ENCODE measurements at regions of chr15 and their contacts with region 1.

Region 1: DNA sequence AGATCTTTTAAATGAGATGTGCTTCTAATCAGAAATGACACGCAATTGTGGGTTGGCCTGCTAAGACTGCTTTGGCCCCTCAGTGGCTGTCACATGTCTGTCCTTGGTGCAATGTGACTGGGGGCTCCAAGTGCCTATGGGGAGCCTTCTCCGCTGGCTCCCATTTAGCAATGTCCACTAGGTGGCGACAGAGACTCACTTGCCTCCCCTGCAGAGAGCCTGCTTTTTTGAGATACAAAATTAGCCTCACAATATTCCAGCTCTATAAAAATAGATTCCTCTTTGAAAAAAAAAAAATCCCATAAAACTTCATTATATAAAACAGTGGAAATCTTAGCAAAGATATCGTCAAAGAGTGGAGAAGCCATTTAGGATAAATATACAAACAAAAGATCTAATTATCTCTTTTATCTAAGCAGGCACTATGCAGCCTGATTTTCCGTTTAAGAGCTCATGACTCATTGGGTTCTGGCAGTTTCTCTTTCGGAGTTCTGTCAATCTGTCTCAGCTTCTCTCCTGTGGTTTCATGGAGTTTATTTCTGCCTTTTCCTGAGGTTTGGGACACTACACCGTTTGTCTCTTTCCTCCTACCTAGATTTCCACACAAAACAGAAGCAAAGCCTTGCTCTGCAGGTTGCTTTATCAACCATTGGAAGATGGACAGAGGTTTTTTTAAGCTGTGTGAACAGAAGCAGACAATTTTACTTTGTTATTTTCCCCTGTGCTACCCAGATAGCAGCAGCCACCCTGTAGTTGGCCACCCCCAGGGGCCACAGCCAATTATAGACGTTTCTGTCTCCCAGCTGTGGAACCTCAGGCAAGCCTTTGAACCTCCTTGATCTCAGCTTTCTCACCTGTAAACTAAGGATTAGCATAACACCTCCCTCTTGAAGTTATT is 68.4 kb upstream of the TNFAIP8L3 start:
- DNase-seq: peak; percentile 9
- ATAC-seq: peak; percentile 99
- H3K4me3 ChIP-seq: no peak overlapping the region
- H3K27ac ChIP-seq: no peak overlapping the region
- H3K4me1 ChIP-seq: no peaks in the 10 kb centered on the region
- H3K27me3 ChIP-seq: no peaks in the 10 kb centered on the region
- CTCF ChIP-seq: peak; percentile 87 to 95 (median 91)
- EP300 ChIP-seq: no peak
- POLR2A ChIP-seq: no peak
- RAD21 ChIP-seq: peak; percentile 92

Region 2: DNA sequence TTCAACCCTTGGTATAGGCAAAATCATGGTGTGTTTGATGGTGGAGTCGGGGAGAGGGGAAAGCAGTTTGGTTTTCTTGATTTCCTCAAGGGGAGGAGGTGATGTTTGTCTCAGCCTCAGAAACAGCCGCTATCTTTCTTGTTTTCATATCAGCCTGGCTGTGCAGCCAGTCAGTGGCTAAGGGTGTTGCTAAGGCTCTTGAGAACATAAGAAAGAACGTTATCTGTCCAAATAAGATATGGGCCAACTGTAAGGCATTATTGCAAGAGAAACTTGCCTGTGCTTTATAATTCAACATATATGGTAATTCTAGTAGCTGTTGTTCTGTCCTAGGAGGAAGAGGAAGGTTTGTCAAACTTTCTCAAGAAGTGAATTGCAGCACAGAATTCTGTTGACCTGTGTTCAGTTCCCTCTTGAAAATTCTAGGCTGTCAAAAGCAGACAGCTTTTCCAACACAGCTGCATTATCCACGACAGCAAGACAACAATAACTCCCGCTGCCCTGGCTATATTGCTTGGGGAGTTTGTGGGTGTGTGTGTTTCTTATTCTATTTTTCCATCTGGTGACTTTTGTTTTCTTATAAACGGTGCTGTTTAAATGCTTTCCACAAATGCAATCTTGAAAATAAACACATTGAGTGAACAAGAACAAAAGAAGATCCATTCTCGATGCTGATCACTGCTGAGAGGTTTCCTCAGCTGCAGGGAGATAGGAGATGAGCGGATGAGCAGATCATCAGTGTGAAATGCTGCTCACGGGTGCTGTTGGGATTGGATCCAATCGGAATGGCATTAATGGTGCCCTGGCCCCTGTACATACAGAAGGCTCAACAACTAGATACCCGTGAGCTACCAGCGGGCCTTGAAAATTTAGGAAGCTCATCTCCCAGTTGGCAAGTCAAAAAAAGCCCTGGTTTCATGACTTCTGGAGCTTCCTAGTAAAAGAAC is 22.4 kb after region 1 on chr15:
- CTCF ChIA-PET with region 1: interaction called, 20 read pairs
- POLR2A ChIA-PET with region 1: no interaction called
- RAD21 ChIA-PET with region 1: interaction called, 3 read pairs
- SMC1A ChIA-PET with region 1: interaction called, 4 read pairs
- in situ Hi-C with region 1: no loop called
- intact Hi-C with region 1: no loop called
- DNase-seq: no peak
- ATAC-seq: no peak
- H3K4me3 ChIP-seq: no peak overlapping the region
- H3K27ac ChIP-seq: no peak overlapping the region
- H3K4me1 ChIP-seq: no peaks in the 10 kb centered on the region; the same call in 1 of the 2 replicates
- H3K27me3 ChIP-seq: peaks cover 0 to 5% of the 10 kb centered on the region in 2 experiments; a peak in 3 of 4 replicates
- CTCF ChIP-seq: no peak
- EP300 ChIP-seq: no peak
- POLR2A ChIP-seq: no peak
- RAD21 ChIP-seq: no peak

Region 3: GRCh38 chr15:51203797-51204196 is 40.7 kb after region 1 on chr15:
- CTCF ChIA-PET with region 1: interaction called, 102 read pairs
- POLR2A ChIA-PET with region 1: no interaction called
- RAD21 ChIA-PET with region 1: no interaction called
- SMC1A ChIA-PET with region 1: interaction called, 6 read pairs
- in situ Hi-C with region 1: no loop called
- intact Hi-C with region 1: no loop called
- DNase-seq: no peak
- ATAC-seq: no peak
- H3K4me3 ChIP-seq: no peak overlapping the region
- H3K27ac ChIP-seq: no peak overlapping the region
- H3K4me1 ChIP-seq: no peaks in the 10 kb centered on the region
- H3K27me3 ChIP-seq: peaks cover 0 to 4% of the 10 kb centered on the region in 2 experiments; a peak in 1 of 4 replicates
- CTCF ChIP-seq: no peak
- EP300 ChIP-seq: no peak
- POLR2A ChIP-seq: no peak
- RAD21 ChIP-seq: no peak

Region 4: DNA sequence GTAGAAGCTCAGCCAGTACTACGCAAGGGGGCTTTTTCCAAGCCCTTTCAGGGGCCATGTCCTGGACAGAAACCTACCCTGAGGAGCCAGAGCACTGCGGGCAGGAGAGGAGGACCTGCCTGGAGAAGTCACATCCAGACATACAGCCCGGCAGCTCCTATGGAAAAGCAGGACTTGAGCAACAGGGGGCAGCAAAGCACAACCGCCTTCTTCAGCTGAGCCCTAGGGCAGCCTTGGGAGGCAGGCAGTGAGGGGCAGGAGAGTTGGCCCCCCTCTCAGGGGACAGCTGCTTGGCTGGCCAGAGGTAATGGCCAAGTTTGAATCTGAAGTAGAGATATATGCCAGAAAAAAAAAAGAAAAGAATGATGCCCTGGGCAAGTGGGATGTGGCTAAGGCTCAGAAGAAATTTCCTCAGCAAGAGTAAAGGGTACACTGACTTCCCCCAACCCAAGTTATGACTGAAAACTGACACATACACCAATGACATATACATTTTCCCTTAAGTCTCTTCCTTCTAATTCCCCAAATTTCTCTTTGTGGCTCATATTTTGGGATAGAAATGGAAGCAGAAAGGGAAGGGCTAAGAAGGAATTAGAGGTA is 118.4 kb after region 1 on chr15:
- CTCF ChIA-PET with region 1: interaction called, 57 read pairs
- POLR2A ChIA-PET with region 1: no interaction called
- RAD21 ChIA-PET with region 1: interaction called, 4 read pairs
- SMC1A ChIA-PET with region 1: interaction called, 22 read pairs
- in situ Hi-C with region 1: no loop called
- intact Hi-C with region 1: loop called (anchors 1 kb)
- DNase-seq: no peak
- ATAC-seq: peak; percentile 93
- H3K4me3 ChIP-seq: no peak overlapping the region
- H3K27ac ChIP-seq: no peak overlapping the region
- H3K4me1 ChIP-seq: peaks cover 10% of the 10 kb centered on the region
- H3K27me3 ChIP-seq: peaks cover 0 to under 1% of the 10 kb centered on the region in 2 experiments; a peak in 1 of 4 replicates
- CTCF ChIP-seq: peak; percentile 61 to 71 (median 68); a peak in 5 of 6 replicates
- EP300 ChIP-seq: no peak
- POLR2A ChIP-seq: no peak
- RAD21 ChIP-seq: peak; percentile 75

Region 5: GRCh38 chr15:51299187-51300066 is 136.3 kb after region 1 on chr15:
- CTCF ChIA-PET with region 1: interaction called, 14 read pairs
- POLR2A ChIA-PET with region 1: no interaction called
- RAD21 ChIA-PET with region 1: interaction called, 3 read pairs
- SMC1A ChIA-PET with region 1: interaction called, 3 read pairs
- in situ Hi-C with region 1: no loop called
- intact Hi-C with region 1: no loop called
- DNase-seq: no peak
- ATAC-seq: no peak
- H3K4me3 ChIP-seq: no peak overlapping the region
- H3K27ac ChIP-seq: no peak overlapping the region
- H3K4me1 ChIP-seq: no peaks in the 10 kb centered on the region
- H3K27me3 ChIP-seq: peaks cover 0 to 3% of the 10 kb centered on the region in 2 experiments; a peak in 3 of 4 replicates
- CTCF ChIP-seq: no peak
- EP300 ChIP-seq: no peak
- POLR2A ChIP-seq: no peak
- RAD21 ChIP-seq: no peak

Region 6: DNA sequence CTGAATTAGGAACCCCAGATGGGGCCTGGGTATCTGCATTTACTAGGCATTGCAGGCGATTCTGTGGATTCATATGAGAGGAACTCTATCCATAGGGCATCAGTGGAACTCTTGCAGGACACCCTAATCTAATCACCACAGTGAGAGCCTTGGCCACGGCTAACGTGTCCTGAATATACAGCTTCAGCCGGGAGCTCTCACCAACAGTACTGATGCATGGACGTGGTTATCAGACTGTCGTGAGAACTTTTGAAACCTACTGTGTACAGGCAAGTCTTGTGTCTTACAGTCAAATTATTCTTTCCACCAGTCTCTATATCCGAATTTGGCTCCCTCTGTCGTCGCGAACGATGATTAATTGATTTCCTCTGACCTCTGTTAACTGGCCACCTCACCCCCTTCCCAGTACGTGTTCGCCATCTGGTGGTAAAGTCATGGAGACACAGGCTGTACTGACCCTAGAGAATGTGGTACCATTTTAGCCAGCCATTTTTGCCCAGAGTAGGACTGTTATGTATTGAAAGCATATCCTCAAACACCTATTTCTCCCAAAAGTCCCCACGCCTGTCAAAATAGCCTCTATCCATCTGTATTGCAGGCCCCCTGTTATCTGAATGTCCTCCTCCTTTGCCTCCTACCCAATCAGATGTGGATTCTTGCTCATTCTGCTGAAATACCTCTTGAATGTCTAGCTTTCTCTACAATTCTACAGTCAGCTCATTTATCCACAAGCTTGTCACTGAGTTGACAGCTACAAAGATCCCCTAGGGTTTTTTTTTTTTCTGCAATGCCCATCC is 218.1 kb after region 1 on chr15:
- CTCF ChIA-PET with region 1: interaction called, 59 read pairs
- POLR2A ChIA-PET with region 1: no interaction called
- RAD21 ChIA-PET with region 1: interaction called, 21 read pairs
- SMC1A ChIA-PET with region 1: interaction called, 32 read pairs
- in situ Hi-C with region 1: loop called (anchors 5 kb)
- intact Hi-C with region 1: loop called (anchors 1 kb)
- DNase-seq: peak; percentile 34
- ATAC-seq: peak; percentile 98
- H3K4me3 ChIP-seq: no peak overlapping the region
- H3K27ac ChIP-seq: no peak overlapping the region
- H3K4me1 ChIP-seq: no peaks in the 10 kb centered on the region
- H3K27me3 ChIP-seq: peaks cover 0 to 6% of the 10 kb centered on the region in 2 experiments; a peak in 3 of 4 replicates
- CTCF ChIP-seq: peak; percentile 81 to 99 (median 97); a peak in 5 of 6 replicates
- EP300 ChIP-seq: no peak
- POLR2A ChIP-seq: no peak
- RAD21 ChIP-seq: peak; percentile 98

Region 7: DNA sequence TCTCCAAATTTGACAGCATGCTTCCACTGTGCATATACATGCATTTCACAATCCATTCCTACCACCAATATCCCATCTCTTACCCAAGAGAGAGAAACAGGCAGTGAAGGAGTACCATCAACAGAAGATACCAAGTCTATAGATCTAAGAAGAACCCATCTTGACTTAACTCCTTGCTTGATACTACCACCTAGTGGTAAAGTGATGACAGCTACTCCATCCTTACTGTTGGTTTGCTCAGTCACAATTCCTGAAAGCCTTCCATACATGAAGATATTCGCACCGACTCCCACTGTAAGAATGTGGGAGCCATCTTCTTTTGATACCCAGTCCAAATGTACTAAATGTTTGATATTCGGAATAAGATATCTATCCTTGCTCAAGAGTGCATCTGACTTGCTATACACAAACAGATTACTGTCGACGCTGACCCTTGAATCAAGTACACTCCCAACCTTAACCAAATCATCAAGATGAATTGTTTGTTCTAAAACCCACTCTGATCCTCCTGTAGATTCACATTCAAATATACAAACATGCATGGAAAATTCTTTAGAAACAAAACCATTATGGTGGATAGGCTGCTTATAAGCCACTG is 336.4 kb after region 1 on chr15:
- CTCF ChIA-PET with region 1: interaction called, 15 read pairs
- POLR2A ChIA-PET with region 1: no interaction called
- RAD21 ChIA-PET with region 1: interaction called, 4 read pairs
- SMC1A ChIA-PET with region 1: interaction called, 12 read pairs
- in situ Hi-C with region 1: no loop called
- intact Hi-C with region 1: loop called (anchors 5 kb)
- DNase-seq: no peak
- ATAC-seq: peak; percentile 87
- H3K4me3 ChIP-seq: no peak overlapping the region
- H3K27ac ChIP-seq: no peak overlapping the region
- H3K4me1 ChIP-seq: no peaks in the 10 kb centered on the region
- H3K27me3 ChIP-seq: no peaks in the 10 kb centered on the region
- CTCF ChIP-seq: peak; percentile 60 to 72 (median 68)
- EP300 ChIP-seq: no peak
- POLR2A ChIP-seq: no peak
- RAD21 ChIP-seq: peak; percentile 65

Measured in GM12878 (cell line).